K562 (cell line): ENCODE measurements at regions of chr10 and their contacts with region 1.

Region 1: DNA sequence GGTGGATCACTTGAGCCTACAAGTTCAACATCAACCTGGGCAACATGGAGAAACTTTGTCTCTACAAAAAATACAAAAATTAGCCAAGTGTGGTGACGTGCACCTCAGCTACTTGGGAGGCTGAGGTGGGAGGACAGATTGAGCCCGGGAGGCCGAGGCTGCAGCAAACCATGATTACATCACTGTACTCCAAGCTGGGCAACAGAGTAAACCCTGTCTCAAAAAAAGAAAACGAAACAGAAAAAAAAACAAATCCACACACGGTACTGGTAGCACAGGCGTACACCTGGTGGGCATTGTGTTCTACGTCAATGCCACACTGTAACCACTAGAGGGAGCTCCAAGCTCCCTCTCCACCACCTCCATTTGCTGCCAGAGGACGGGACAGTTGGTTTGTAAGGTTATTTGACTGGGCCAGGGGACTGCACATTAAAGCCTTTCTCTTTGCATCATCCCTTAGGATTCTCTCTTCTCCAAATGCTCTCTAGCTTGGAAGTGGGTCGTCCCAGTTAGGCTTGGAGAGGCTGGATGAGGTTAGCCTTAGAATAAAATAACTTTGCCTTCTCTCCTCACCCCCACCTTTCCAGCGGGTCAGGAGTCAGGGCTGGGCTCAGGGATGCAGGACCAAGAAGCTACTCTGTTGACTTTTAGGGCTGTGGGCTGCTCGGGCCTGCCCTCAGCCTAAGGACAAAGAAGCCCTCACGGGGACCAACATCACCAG is 130.8 kb downstream of the SORBS1 start:
- DNase-seq: peak; percentile 67 to 71 (median 70)
- ATAC-seq: peak; percentile 91
- H3K4me3 ChIP-seq: no peak overlapping the region
- H3K27ac ChIP-seq: no peak overlapping the region
- H3K4me1 ChIP-seq: peaks cover 0 to 16% of the 10 kb centered on the region in 2 experiments; a peak in 4 of 5 replicates
- H3K27me3 ChIP-seq: no peaks in the 10 kb centered on the region
- CTCF ChIP-seq: peak; percentile 86 to 94 (median 88)
- EP300 ChIP-seq: no peak
- POLR2A ChIP-seq: no peak
- RAD21 ChIP-seq: peak; percentile 82 to 91

Region 2: DNA sequence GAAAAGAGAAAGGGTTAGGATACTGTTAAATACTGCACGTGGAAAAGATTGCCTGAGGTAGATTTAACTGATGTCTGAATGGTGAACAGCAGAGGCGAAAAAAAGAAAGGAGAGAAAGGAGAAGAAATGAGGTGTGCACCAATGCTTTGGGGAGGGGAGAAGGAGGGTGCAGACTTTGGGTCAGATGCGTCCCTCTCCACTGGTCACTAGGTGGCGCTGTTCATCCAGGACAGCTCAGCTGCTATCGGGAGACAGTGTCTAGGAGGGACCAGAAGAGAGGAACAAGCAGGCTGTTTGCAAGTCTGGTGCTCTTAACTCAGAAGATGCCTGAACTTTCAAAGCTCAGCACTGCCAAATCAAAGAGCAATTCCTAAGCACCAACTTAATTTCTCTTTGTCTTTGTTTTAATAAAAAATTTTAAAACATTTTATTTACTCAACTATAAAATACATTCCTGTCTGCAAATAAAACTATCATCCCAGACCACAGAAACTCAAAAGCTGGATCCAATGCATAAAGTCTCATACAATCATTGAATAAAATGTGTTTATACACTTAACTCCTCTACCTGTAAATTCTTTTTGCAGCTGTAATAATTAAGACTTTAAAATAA is 55.7 kb before region 1 on chr10:
- CTCF ChIA-PET with region 1: interaction called, 3 read pairs
- POLR2A ChIA-PET with region 1: interaction called, 4 read pairs
- in situ Hi-C with region 1: no loop called
- intact Hi-C with region 1: loop called (anchors 5 kb)
- DNase-seq: peak; percentile 79 to 86 (median 83)
- ATAC-seq: peak; percentile 99
- H3K4me3 ChIP-seq: no peak overlapping the region
- H3K27ac ChIP-seq: no peak overlapping the region
- H3K4me1 ChIP-seq: no peaks in the 10 kb centered on the region; a peak in 1 of 5 replicates
- H3K27me3 ChIP-seq: no peaks in the 10 kb centered on the region
- CTCF ChIP-seq: peak; percentile 87 to 88 (median 87)
- EP300 ChIP-seq: no peak
- POLR2A ChIP-seq: no peak
- RAD21 ChIP-seq: peak; percentile 87 to 96

Region 3: GRCh38 chr10:95391581-95392216 is 38.7 kb before region 1 on chr10:
- CTCF ChIA-PET with region 1: no interaction called
- POLR2A ChIA-PET with region 1: no interaction called
- in situ Hi-C with region 1: no loop called
- intact Hi-C with region 1: loop called (anchors 5 kb)
- DNase-seq: peak in 3 of 4 experiments; percentile 16 to 46 (median 20)
- ATAC-seq: peak; percentile 87
- H3K4me3 ChIP-seq: no peak overlapping the region
- H3K27ac ChIP-seq: no peak overlapping the region
- H3K4me1 ChIP-seq: peaks cover 9 to 17% of the 10 kb centered on the region in 2 experiments
- H3K27me3 ChIP-seq: no peaks in the 10 kb centered on the region
- CTCF ChIP-seq: peak in 2 of 3 experiments; percentile 15 to 32; a peak in 2 of 6 replicates
- EP300 ChIP-seq: no peak
- POLR2A ChIP-seq: no peak
- RAD21 ChIP-seq: no peak

Region 4: GRCh38 chr10:95467162-95467599 is 36.8 kb after region 1 on chr10:
- CTCF ChIA-PET with region 1: no interaction called
- POLR2A ChIA-PET with region 1: no interaction called
- in situ Hi-C with region 1: no loop called
- intact Hi-C with region 1: loop called (anchors 5 kb)
- DNase-seq: peak; percentile 45 to 83 (median 62)
- ATAC-seq: peak; percentile 100
- H3K4me3 ChIP-seq: no peak overlapping the region
- H3K27ac ChIP-seq: peak overlapping the region; percentile 50; the same call in 2 of the 3 replicates
- H3K4me1 ChIP-seq: peaks cover 0 to 3% of the 10 kb centered on the region in 2 experiments; a peak in 3 of 5 replicates
- H3K27me3 ChIP-seq: no peaks in the 10 kb centered on the region
- CTCF ChIP-seq: peak; percentile 52 to 69 (median 59)
- EP300 ChIP-seq: no peak
- POLR2A ChIP-seq: no peak
- RAD21 ChIP-seq: peak; percentile 63 to 68